GM18951 (cell line): ENCODE measurements at regions of chr22 and their contacts with region 1.

Region 1: GRCh38 chr22:22357024-22357883 is 112.7 kb downstream of the VPREB1 start:
- POLR2A ChIP-seq: peak; percentile 34

Region 2: GRCh38 chr22:22877523-22878210 is 520.4 kb after region 1 on chr22:
- in situ Hi-C with region 1: no loop called
- POLR2A ChIP-seq: no peak

Region 3: GRCh38 chr22:22959147-22959827 is 602.0 kb after region 1 on chr22:
- in situ Hi-C with region 1: loop called (anchors 10 kb)
- POLR2A ChIP-seq: no peak